Heart left ventricle (tissue), 16 donors: ENCODE measurements at regions of chr12 and their contacts with region 1.

Region 1: GRCh38 chr12:62934799-62935674 is at the start of gene PPM1H:
- DNase-seq: peak; percentile 70 to 87 (median 79)
- ATAC-seq: peak; percentile 73 to 92 (median 86)
- H3K4me3 ChIP-seq: peak within 1 kb of the TSS; percentile 52 to 96 (median 77)
- H3K27ac ChIP-seq: peak within 1 kb of the TSS in 11 of 12 donors; percentile 59 to 92 (median 78)
- H3K4me1 ChIP-seq: peaks cover 0 to 29% (median 8%) of the 10 kb centered on the region in 12 donors
- H3K27me3 ChIP-seq: no peaks in the 10 kb centered on the region
- CTCF ChIP-seq: peak; percentile 11 to 68 (median 55)
- POLR2A ChIP-seq: peak in 1 of 2 donors; percentile 51
- total RNA-seq, gene PPM1H: 4.2 to 9.6 (median 5.8) TPM

Region 2: DNA sequence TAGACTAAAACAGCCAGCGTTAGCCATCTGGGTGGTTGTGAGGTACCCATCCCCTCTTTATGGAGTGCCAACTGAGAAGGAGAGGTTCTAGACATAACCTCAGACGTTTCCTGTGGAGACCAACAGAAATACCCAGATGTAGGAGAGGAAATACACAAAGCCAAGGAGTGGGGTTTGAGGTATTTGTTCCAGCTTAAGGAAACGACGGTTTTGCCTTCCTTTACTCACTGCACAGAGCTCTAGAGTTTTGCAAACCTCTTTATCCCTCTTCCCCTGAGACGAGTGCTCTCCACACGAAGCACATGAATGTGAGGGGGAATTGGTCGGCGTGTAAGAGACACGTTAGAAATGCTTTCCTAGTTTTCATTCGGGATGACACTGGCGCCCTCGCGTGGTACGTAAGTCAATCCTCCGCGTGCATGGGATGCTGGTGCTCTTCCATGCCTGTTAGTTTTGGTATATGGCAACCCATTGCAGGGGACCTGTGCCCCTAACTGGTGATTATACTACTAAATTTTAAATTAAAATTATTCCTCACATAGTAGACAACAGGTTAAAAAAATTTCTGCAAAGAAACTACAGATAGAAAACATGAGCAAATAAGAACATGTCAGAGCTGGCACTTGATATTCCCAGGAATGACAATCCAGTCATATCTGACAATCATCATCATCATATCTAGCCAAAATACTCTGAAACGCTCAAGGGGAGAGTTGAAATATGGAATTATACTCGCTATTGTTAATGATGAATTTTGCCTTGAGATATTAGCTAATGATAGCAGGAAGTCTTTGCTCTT is 121.8 kb before region 1 on chr12:
- intact Hi-C with region 1: loop called (anchors 1 to 10 kb)
- DNase-seq: peak; percentile 52 to 76 (median 61)
- ATAC-seq: peak in 3 of 4 donors; percentile 70 to 83 (median 76)
- H3K4me3 ChIP-seq: peak overlapping the region in 6 of 12 donors; percentile 3 to 40 (median 22)
- H3K27ac ChIP-seq: no peak overlapping the region
- H3K4me1 ChIP-seq: peaks cover 0 to 15% (median 6%) of the 10 kb centered on the region in 12 donors
- H3K27me3 ChIP-seq: no peaks in the 10 kb centered on the region
- CTCF ChIP-seq: peak; percentile 51 to 85 (median 72)
- POLR2A ChIP-seq: no peak

Region 3: DNA sequence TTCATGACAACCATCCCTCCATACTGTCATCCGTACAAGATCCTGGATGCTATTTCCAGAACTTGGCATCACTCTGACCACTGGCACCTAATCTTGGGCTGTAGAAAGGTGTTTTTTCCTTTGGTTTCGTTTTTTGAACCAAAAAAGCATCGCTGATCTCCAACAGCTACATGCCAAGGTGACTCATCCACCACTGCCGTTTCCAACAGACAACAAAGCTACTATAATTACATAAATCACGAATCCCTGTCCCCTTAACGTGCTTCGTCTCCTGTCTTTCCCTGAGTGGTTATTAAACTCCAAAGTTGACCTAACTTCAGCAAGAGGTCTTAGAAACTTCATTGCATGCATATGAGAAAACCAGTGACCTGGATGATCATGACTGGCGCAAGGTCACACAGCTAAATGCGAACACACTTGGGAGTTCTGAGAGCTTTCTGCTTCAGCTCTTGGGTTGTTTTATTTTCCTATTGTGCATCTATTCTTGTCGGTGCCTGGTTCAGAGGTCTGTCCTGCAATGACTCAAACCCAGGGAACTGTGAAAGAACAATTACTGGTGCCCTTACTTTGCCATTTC is 100.0 kb before region 1 on chr12:
- intact Hi-C with region 1: loop called in 1 of 10 experiments (anchors 5 kb)
- DNase-seq: peak in 2 of 5 donors; percentile 27 to 30
- ATAC-seq: peak in 3 of 4 donors; percentile 14 to 51 (median 45)
- H3K4me3 ChIP-seq: peak overlapping the region in 4 of 12 donors; percentile 1 to 19 (median 14)
- H3K27ac ChIP-seq: peak overlapping the region in 4 of 12 donors; percentile 9 to 49 (median 36)
- H3K4me1 ChIP-seq: peaks cover 0 to 17% (median 7%) of the 10 kb centered on the region in 12 donors
- H3K27me3 ChIP-seq: no peaks in the 10 kb centered on the region
- CTCF ChIP-seq: no peak
- POLR2A ChIP-seq: no peak

Region 4: DNA sequence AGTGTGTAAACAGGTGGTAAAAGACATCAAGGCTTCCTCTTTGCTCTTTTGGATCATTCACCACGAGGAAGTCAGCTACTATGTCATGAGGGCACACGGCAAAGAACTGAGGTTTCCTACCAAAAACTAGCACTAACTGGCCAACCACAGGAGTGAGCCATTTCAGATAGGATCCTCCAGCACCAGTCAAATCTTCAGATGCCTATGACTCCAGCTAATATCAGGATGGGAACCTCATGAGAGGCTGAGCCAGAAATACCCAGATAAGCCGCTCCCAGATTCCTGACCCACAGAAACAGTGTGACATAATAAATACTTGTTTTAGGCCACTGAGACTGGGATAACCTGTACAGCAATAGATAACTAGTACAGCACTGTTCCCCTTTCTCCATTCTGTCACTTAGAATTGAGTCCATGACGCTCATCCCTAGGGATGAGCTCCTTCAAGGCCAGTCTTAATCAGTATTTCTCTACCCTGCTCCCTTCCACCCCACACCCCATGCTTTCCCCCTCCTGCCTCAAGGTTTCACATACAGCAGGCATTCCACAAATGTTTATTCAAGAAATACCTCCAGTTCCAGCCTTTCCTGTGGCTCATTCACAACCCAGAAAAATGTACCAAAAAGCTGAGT is 68.5 kb before region 1 on chr12:
- intact Hi-C with region 1: loop called in 6 of 10 experiments (anchors 5 to 10 kb)
- DNase-seq: no peak
- ATAC-seq: peak in 3 of 4 donors; percentile 33 to 47 (median 36)
- H3K4me3 ChIP-seq: no peak overlapping the region
- H3K27ac ChIP-seq: peak overlapping the region in 11 of 12 donors; percentile 10 to 63 (median 41)
- H3K4me1 ChIP-seq: peaks cover 6 to 48% (median 34%) of the 10 kb centered on the region in 12 donors
- H3K27me3 ChIP-seq: no peaks in the 10 kb centered on the region
- CTCF ChIP-seq: no peak
- POLR2A ChIP-seq: no peak